ENCODE measurements at regions of chr19 and their contacts with region 1.

Region 1: DNA sequence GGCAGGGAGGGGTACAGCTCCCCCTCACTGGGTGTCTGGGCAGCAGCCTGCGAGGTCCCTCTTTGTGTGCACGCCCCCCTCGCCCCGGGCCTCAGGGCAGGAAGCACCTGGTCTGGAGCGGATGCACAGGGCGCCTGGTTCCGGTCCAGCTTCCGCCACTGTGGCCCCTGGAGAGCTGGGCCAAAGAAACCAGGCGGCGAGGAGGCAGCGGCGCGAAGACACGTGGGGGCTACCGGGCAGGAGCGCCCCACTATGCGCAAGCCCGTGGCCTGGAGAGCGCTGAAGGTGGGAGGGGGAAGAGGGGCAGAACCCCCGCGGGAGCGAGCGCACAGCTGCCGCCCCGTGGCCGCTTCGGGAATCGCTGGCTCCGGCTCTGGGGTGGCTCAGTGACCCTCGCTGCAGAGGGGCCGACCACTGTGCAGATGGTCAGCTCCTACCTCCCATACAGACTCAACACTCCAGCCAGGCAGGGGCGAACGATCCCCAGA is 1.7 kb upstream of the LYL1 start:
- DNase-seq: peak; percentile 85
- CTCF ChIP-seq: peak; percentile 90

Region 2: GRCh38 chr19:12983542-12984142 is 120.8 kb before region 1 on chr19:
- CTCF ChIA-PET with region 1: interaction called, 24 read pairs
- POLR2A ChIA-PET with region 1: no interaction called
- DNase-seq: peak; percentile 88
- CTCF ChIP-seq: peak; percentile 95

Region 3: DNA sequence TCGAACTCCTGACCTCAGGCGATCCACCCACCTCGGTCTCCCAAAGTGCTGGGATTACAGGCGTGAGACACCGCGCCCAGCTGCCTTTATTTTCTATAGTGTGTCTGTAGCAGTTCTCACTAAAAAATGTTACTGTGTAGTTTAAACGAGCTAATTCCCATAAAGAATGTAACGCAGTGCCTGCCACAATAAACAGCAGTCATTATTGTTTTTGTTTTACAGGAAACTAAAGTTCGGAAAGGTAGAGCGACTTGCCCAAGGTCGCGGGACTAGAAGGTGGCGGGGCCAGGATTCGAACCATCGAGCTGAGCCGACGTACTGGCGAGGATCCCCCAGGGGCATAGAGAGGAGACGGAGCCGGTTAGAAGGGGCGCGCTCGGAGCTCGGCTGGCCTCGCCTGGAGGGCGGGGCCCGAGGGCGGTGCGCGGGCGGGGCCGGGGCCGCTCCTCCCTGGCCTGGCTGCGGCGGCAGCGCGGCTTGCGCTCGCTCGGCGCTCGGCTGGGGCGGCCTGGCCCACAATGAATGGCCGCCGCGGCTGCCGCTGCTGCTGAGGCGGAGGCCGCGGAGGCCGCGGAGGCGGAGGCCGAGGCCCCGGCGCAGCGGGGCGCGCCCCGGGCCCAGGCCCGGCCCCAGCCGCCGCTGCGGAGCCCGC is 13.5 kb after region 1 on chr19 and contains the start of gene NACC1:
- CTCF ChIA-PET with region 1: interaction called, 25 read pairs
- POLR2A ChIA-PET with region 1: interaction called, 4 read pairs
- DNase-seq: peak; percentile 98
- CTCF ChIP-seq: no peak

Region 4: DNA sequence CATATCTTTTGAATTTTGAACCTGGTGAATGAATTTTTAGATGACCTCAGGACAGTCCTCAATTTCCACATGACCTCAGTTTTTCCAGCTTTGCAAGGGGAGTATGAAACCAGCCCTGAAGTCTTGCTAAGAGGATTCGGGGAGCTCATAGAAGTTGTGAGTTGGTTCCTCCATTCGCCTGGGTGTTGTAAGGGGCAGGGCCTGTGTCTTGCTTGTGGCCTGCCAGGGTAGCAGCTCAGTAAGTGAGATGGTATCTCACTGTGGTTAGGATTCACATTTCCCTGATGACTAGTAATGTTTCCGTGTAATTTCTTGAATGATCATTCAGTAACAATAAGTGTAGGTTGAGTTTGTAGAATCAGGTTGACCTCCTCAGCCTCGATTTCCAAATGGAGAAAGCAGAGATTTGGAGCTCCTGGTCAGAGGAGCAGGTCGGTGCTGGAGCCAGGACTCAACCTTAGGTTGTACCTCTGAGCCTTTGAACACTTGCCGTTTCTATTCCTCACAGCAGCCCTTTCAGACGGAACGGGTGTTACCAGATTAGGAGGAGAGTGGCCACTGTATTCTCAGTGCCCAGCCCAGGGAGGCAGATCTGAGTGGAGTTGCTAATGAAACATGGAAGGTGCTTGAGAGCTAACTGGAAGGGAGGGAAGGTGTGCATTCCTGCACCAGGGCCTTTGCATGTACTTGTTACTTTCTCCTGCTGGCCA is 28.2 kb after region 1 on chr19:
- CTCF ChIA-PET with region 1: interaction called, 10 read pairs
- POLR2A ChIA-PET with region 1: interaction called, 7 read pairs
- DNase-seq: no peak
- CTCF ChIP-seq: no peak

Region 5: DNA sequence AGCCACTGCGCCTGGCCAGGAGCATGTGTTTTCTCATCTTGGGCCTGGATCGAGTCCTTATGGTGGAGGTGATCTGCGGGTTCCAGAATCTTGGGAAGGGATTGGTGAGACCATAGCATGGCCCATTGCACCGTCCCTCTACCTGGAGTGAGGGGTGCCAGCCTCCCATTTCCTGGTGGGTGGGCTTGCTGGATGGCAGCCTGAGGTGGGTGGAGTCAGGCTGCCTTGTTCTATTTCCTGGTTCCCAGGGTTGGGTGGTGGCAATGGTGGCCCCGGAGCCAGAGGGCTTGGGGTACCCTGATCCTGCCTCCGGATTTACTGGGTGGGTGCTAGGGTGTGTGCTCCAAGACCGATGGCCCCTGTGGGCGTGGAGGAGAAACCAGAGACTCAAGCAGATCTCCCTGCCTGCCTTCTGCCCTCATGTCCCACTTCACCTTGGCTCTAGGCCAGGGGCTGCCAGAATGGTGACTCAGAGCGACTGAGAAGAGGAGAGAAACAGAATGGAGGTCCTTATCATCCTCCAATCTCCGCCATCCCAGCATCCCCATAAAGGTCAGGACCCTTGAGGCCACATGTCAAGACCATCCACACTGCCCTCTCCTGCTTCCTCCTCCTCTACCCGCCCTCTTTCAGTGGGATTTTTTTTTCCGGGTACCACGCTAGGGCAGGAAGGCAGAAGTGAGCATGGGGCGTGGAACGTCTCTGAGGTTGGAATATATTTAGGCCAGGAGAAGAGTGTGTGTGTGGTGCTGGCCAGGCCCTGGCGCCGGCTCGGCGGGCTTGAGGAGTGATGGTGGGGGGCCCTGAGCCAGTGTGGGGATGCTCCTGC is 67.9 kb after region 1 on chr19:
- CTCF ChIA-PET with region 1: no interaction called
- POLR2A ChIA-PET with region 1: no interaction called
- DNase-seq: peak; percentile 26
- CTCF ChIP-seq: no peak

Measured in GM10248 (cell line).